ENCODE measurements at regions of chr12 and their contacts with region 1.

Region 1: DNA sequence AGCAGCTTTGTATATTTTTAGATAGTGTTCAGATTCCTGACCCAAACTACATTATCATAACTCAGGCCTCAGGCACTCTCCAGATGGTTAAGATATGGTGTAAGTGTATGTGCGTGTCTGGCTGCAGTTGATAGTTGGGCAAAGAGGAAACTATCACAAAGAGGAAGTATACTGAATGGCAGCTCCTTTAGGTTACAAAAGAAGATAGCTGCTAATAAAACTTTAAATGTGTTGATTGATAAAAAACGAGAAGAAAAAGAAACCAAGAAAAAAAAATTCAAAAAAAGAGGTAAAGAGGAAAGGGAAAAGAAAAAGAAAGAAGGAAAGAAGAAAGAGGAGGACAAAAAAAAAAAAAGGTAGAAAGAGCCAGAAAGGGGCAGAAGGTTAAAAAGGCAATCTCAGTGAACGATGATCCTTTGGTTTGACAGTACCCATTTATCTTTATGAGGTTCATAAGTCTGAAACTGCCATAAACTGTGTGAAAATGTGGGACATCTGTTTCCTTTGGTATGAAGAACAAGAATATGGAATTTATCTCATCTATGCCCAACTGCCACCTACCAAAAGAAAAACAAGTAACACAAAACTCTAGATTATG is 42.2 kb downstream of the TAOK3 start:
- DNase-seq: no peak
- ATAC-seq: peak; percentile 86
- H3K4me3 Mint-ChIP-seq: peak overlapping the region; percentile 60
- H3K27ac Mint-ChIP-seq: peak overlapping the region; percentile 93
- H3K4me1 Mint-ChIP-seq: peaks cover 61% of the 10 kb centered on the region
- H3K27me3 Mint-ChIP-seq: no peaks in the 10 kb centered on the region
- CTCF ChIP-seq: no peak

Region 2: DNA sequence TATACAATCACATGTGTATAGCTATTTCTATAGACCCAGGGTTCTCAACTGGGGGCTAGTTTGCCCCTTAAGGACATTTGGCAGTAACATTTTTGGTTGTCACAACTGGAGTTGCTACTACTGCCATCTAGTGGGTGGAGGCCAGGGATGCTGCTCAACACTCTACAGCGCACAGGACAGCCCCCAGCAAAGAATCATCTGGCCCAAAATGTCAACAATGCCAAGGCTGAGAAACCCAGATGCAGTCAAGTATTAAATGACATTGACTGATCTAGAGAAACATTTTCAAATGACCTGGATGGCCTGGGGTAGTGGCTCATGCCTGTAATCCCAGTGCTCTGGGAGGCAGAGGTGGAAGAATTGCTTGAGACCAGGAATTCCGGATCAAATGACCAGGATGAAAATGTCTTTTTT is 275.4 kb before region 1 on chr12:
- CTCF ChIA-PET with region 1: no interaction called
- POLR2A ChIA-PET with region 1: no interaction called
- intact Hi-C with region 1: no loop called
- DNase-seq: peak; percentile 45
- ATAC-seq: peak; percentile 95
- H3K4me3 Mint-ChIP-seq: no peak overlapping the region
- H3K27ac Mint-ChIP-seq: no peak overlapping the region
- H3K4me1 Mint-ChIP-seq: peaks cover 20% of the 10 kb centered on the region
- H3K27me3 Mint-ChIP-seq: no peaks in the 10 kb centered on the region
- CTCF ChIP-seq: no peak

Region 3: DNA sequence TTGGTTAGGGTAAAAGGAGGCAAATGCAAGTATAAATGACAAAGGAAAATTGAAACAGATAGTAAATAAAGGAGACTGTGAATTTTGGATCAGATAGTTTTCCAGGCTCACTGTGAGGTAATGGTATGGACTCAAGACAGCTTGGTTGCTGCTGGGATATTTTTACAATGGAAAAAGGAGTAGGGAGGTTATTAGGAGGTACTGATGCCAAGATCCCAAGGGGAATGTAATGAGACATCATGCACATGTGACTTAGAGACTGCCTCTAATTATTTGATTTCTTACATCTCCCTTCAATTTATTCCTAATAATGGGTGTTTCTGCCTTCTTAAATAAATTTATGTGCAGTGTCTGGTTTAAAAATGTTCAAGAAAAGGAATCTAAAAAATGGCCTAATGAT is 14.7 kb before region 1 on chr12:
- CTCF ChIA-PET with region 1: no interaction called
- POLR2A ChIA-PET with region 1: no interaction called
- intact Hi-C with region 1: no loop called
- DNase-seq: no peak
- ATAC-seq: no peak
- H3K4me3 Mint-ChIP-seq: no peak overlapping the region
- H3K27ac Mint-ChIP-seq: no peak overlapping the region
- H3K4me1 Mint-ChIP-seq: peaks cover 40% of the 10 kb centered on the region
- H3K27me3 Mint-ChIP-seq: no peaks in the 10 kb centered on the region
- CTCF ChIP-seq: no peak

Region 4: DNA sequence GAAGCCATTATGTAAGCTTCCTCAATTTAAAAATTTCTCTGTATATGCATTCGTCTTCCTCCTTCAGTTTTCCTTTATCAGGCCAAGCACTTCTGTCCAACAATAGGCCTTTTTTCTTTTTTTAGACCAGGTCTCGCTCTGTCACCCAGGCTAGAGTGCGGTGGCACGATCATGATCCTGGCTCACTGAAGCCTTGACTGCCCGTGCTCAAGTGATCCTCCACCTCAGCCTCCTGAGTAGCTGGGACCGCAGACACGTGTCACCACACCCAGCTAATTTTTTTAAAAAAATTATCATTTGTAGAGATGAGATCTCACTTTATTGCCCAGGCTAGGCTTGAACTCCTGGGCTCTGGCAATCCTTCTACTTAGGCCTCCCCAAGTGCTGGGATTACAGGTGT is 16.4 kb after region 1 on chr12:
- CTCF ChIA-PET with region 1: no interaction called
- POLR2A ChIA-PET with region 1: interaction called, 8 read pairs
- intact Hi-C with region 1: loop called (anchors 2 kb)
- DNase-seq: peak; percentile 24
- ATAC-seq: peak; percentile 92
- H3K4me3 Mint-ChIP-seq: peak overlapping the region; percentile 73
- H3K27ac Mint-ChIP-seq: peak overlapping the region; percentile 91
- H3K4me1 Mint-ChIP-seq: peaks cover 55% of the 10 kb centered on the region
- H3K27me3 Mint-ChIP-seq: no peaks in the 10 kb centered on the region
- CTCF ChIP-seq: no peak

Measured in activated B cell treated with CpG ODN at 0.5 μM for 24 hours (primary cell).